Activated CD4-positive, alpha-beta T cell treated with anti-CD3 and anti-CD28 coated beads, Interleukin-2, amount 10 ng/mL, durations not matched to agents 24 days and 14 days (primary cell): ENCODE measurements at regions of chr5 and their contacts with region 1.

Region 1: DNA sequence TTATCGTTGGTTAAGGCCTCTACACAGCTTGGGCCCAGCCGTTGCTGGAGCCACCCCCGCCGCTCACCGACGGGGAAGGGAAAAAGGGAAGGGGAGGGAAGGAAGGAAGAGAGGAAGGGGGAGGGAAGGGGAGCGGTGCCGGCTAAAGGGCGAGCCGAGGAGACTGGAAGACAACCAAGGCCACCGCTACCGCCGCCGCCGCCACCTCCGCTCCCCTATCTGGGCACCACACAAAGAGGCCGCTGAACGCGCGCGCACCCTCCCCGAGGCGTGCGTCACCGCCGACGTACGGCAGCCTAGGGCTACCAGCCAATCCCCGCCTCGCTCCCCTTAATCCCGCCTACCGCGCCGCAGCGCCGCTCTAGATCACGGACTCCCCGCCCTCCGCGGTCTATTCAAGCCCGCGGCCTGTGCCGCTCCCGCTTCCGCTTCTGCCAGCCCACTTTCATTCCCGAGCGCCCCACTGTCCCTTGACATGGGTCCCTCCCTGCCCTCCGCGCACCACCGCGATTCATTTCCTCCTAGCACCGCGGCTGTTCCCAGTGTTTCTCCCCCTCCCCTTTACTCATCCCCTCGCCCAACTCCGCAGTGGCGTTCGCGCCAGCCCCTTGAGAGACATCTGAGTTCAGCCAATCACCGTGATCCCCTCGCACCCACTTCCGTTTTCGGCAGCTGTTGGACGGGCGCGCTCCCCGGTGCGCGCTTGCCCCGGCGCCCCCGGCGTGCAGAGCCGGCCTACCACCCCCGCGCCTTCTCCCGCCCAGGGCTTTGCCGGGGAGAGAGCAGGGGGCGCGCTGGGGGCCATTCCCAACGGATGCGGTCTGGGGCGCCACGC is at the start of gene HNRNPA0:
- DNase-seq: peak; percentile 99
- H3K4me3 Mint-ChIP-seq: peak within 1 kb of the TSS; percentile 93
- H3K27ac Mint-ChIP-seq: peak within 1 kb of the TSS; percentile 100
- H3K4me1 Mint-ChIP-seq: peaks cover 26% of the 10 kb centered on the region
- H3K27me3 Mint-ChIP-seq: peaks cover 9% of the 10 kb centered on the region
- total RNA-seq, gene HNRNPA0: 38.3 and 38.6 TPM in 2 replicates

Region 2: DNA sequence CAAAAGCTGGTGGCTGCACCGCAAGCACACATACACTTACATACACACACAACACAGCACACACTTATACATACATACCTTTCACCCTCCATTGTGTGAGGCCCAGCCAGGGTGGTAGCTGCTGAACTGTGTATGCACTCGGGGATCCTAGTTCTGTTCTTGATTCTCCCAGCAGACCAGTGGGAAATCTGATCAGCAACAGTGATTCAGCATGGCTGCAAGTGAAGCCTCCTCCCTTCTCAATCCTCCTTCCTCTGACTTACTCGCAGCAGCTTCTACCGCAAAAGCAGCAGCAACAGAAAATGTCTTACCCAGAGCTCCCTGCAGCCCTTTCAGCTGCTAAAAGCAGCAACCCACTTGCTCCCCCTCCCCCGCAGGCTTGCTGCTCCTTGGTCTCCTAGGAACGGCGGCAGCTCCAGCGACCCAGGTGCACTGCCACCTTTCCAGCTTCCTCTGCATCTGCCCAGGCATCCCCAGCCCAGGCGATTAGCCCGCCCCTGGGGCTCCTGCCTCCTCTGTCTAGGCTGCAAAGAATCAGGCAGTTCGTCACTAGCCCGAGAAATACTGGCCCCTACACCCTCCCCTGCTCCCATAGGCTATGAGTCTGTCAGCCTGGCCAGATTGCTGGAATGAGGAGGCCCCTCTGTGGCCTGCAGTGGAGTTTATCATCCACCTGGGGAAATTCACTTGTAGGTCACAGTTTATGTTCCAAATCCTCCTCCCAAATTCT is 18.6 kb before region 1 on chr5 and contains the start of gene KLHL3:
- intact Hi-C with region 1: loop called (anchors 1 kb)
- DNase-seq: peak; percentile 78
- H3K4me3 Mint-ChIP-seq: no peak within 1 kb of the TSS
- H3K27ac Mint-ChIP-seq: no peak within 1 kb of the TSS
- H3K4me1 Mint-ChIP-seq: peaks cover 6% of the 10 kb centered on the region
- H3K27me3 Mint-ChIP-seq: peaks cover 3% of the 10 kb centered on the region
- total RNA-seq, gene KLHL3: 1.5 and 2.2 TPM in 2 replicates

Region 3: GRCh38 chr5:137847687-137848086 is 93.3 kb after region 1 on chr5:
- intact Hi-C with region 1: no loop called
- DNase-seq: no peak
- H3K4me3 Mint-ChIP-seq: no peak overlapping the region
- H3K27ac Mint-ChIP-seq: no peak overlapping the region
- H3K4me1 Mint-ChIP-seq: no peaks in the 10 kb centered on the region
- H3K27me3 Mint-ChIP-seq: no peaks in the 10 kb centered on the region

Region 4: GRCh38 chr5:137888857-137889759 is 134.8 kb after region 1 on chr5 and contains the start of gene PKD2L2:
- intact Hi-C with region 1: loop called (anchors 2 kb)
- DNase-seq: peak; percentile 94
- H3K4me3 Mint-ChIP-seq: peak within 1 kb of the TSS; percentile 88
- H3K27ac Mint-ChIP-seq: peak within 1 kb of the TSS; percentile 90
- H3K4me1 Mint-ChIP-seq: peaks cover 15% of the 10 kb centered on the region
- H3K27me3 Mint-ChIP-seq: peaks cover 4% of the 10 kb centered on the region
- total RNA-seq, gene PKD2L2: not detected in 2 replicates

Region 5: DNA sequence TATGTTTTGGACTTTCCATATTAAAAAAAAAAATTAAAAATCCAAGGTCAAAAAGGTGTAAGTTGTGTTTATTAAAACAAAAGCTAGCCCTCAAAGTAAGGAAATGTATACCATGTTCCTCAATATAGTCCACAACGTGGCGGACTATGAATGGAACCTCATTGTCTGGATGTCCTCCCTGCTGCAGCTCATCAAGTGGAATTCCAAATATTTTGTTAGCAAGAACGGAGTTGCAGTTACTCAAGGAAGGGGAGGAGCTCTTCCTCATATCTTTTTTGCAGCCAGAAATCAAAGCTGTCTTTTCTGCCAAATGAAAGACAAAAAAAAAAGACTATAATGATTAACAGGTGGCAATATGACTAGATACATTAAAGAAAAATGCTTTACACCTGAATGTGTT is 264.5 kb after region 1 on chr5:
- intact Hi-C with region 1: no loop called
- DNase-seq: no peak
- H3K4me3 Mint-ChIP-seq: no peak overlapping the region
- H3K27ac Mint-ChIP-seq: no peak overlapping the region
- H3K4me1 Mint-ChIP-seq: peaks cover 17% of the 10 kb centered on the region
- H3K27me3 Mint-ChIP-seq: no peaks in the 10 kb centered on the region

Region 6: GRCh38 chr5:138035605-138036537 is 281.5 kb after region 1 on chr5:
- intact Hi-C with region 1: loop called (anchors 1 kb)
- DNase-seq: peak; percentile 90
- H3K4me3 Mint-ChIP-seq: peak overlapping the region; percentile 1
- H3K27ac Mint-ChIP-seq: no peak overlapping the region
- H3K4me1 Mint-ChIP-seq: peaks cover 23% of the 10 kb centered on the region
- H3K27me3 Mint-ChIP-seq: no peaks in the 10 kb centered on the region

Region 7: DNA sequence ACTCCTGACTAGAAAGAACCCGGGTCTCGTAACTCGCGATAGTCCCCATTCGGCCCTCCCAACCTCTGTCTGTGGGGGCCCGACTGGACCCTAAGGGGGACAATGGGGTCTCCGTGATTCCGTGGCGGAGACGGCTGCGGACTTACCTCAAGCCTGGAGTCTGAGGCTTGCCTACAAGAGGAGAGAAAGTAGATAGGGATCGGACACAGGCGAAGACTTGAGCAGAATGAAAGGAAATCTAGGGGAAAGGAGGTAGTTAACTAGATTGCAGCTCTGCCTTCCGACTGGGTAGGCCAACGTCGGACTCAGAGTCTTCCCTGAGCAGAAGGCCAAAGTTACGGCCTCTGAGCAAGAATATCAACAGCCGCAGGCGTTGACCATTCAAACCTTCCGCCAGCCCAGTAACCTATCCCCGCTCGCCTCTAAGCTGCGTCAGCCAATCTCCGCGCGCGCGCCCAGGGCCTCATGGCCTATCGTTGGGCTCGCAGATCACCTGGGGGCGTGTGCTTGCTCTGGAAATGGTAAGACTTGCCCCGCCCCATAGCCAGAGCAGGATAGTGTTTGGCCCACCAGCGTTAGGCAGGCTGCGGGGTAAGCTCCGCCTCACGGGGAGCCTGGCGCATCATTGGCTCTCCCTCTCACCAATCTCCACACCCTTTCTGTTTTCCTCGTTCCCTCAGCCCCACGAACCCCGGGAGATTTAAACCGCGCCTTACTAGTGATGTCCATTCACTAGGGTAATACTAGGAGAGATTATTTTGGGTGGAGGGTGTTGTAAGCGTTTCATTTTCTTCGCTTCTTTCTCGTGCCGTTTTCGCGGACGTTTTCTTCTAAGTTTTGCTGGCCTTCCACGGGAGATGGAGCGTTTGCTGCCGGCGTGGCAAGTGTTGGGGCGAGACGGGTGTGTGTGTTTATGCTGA is 577.4 kb after region 1 on chr5 and contains the start of gene CDC25C:
- intact Hi-C with region 1: loop called (anchors 10 kb)
- DNase-seq: peak; percentile 99
- H3K4me3 Mint-ChIP-seq: peak within 1 kb of the TSS; percentile 89
- H3K27ac Mint-ChIP-seq: peak within 1 kb of the TSS; percentile 57
- H3K4me1 Mint-ChIP-seq: peaks cover 30% of the 10 kb centered on the region
- H3K27me3 Mint-ChIP-seq: no peaks in the 10 kb centered on the region
- total RNA-seq, gene CDC25C: 6.7 and 7.9 TPM in 2 replicates

Region 8: GRCh38 chr5:138542956-138543729 is 788.8 kb after region 1 on chr5 and contains the start of gene ETF1:
- intact Hi-C with region 1: loop called (anchors 2 kb)
- DNase-seq: peak; percentile 100
- H3K4me3 Mint-ChIP-seq: peak within 1 kb of the TSS; percentile 99
- H3K27ac Mint-ChIP-seq: peak within 1 kb of the TSS; percentile 100
- H3K4me1 Mint-ChIP-seq: peaks cover 49% of the 10 kb centered on the region
- H3K27me3 Mint-ChIP-seq: no peaks in the 10 kb centered on the region
- total RNA-seq, gene ETF1: 200 and 205 TPM in 2 replicates